ENCODE measurements at regions of chr19 and their contacts with region 1.

Region 1: GRCh38 chr19:39212375-39212742 is 8.3 kb upstream of the SYCN start:
- DNase-seq: peak in 1 of 2 experiments; percentile 85
- H3K4me3 ChIP-seq: no peak overlapping the region
- H3K27ac ChIP-seq: no peak overlapping the region
- H3K4me1 ChIP-seq: 0 out of 7 replicates have a peak, but pooled peaks cover 0 to 3% (median 0%) of the 10 kb centered on the region in 4 experiments
- H3K27me3 ChIP-seq: peaks cover 0 to 2% (median 0%) of the 10 kb centered on the region in 4 experiments; a peak in 1 of 7 replicates
- CTCF ChIP-seq: peak; percentile 76 to 94 (median 81)
- EP300 ChIP-seq: no peak
- POLR2A ChIP-seq: no peak
- RAD21 ChIP-seq: peak; percentile 93 to 97

Region 2: DNA sequence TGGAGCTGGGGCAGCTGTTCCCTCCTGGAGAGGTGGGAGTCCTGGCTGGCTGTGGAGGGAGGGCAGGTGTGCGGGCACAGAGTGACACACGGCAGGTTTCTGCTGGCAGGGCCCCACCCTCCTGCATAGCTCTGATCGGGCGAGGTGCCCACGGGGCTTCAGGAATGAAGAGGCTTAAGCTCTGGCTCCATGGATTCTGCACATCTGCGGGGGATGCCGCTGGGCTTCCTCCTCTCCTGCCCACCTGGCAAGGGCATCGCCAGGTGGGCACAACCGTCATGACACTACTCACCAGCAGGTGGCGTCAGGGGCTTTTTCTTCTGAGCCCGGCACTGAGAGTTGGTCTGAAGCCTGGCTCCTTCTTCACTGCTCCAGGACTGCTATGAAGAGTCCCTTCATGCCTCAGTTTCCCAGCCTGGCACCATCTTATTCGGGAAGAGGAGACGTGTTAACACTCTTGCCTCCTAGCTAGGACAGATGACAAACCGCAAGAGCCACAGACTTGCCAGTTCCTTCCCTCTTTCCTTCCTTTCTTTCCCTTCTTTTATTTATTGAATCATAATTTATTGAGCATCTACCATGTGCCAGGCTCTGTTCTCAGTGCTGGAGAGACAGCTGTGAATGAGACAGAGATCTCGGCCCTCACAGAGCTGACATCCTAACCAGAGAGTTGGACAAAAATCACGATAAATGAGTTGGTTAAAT is 101.9 kb before region 1 on chr19:
- CTCF ChIA-PET with region 1: interaction called, 17 read pairs
- POLR2A ChIA-PET with region 1: no interaction called
- DNase-seq: peak in 1 of 2 experiments; percentile 92
- H3K4me3 ChIP-seq: no peak overlapping the region
- H3K27ac ChIP-seq: no peak overlapping the region
- H3K4me1 ChIP-seq: peaks cover 0 to 5% (median 0%) of the 10 kb centered on the region in 4 experiments; a peak in 3 of 7 replicates
- H3K27me3 ChIP-seq: no peaks in the 10 kb centered on the region
- CTCF ChIP-seq: peak; percentile 79 to 87 (median 82)
- EP300 ChIP-seq: no peak
- POLR2A ChIP-seq: no peak
- RAD21 ChIP-seq: peak; percentile 73 to 82

Region 3: DNA sequence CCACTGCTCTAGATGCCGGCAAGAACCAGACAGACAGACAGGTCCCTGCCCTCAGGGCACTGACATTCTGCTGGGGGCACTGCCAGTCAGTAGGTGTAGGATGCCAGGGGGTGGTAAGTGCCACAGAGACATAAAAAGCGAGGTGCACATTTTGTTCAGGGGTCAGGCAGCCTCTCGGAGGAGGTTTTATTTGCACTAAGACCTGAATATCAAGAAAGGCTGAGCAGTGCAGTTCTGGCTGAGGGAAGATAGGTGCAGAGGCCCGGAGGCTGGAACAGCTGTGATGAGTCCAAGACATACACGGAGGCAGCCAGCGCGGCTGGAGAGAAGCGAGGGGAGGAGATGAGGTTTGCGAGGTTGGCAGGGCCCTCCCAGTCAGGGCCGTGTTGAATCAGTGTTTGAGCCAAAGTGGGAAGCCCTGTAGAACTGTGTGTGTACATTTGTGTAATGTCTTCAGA is 52.0 kb before region 1 on chr19:
- CTCF ChIA-PET with region 1: no interaction called
- POLR2A ChIA-PET with region 1: no interaction called
- DNase-seq: no peak
- H3K4me3 ChIP-seq: no peak overlapping the region
- H3K27ac ChIP-seq: no peak overlapping the region
- H3K4me1 ChIP-seq: peaks cover 0 to 23% (median 10%) of the 10 kb centered on the region in 4 experiments; a peak in 6 of 7 replicates
- H3K27me3 ChIP-seq: peaks cover 0 to 1% (median 0%) of the 10 kb centered on the region in 4 experiments; a peak in 1 of 7 replicates
- CTCF ChIP-seq: no peak
- EP300 ChIP-seq: no peak
- POLR2A ChIP-seq: no peak
- RAD21 ChIP-seq: no peak

Region 4: GRCh38 chr19:39193803-39194202 is 18.6 kb before region 1 on chr19:
- CTCF ChIA-PET with region 1: interaction called, 10 read pairs
- POLR2A ChIA-PET with region 1: no interaction called
- DNase-seq: no peak
- H3K4me3 ChIP-seq: no peak overlapping the region
- H3K27ac ChIP-seq: no peak overlapping the region
- H3K4me1 ChIP-seq: peaks cover 0 to 9% (median 8%) of the 10 kb centered on the region in 4 experiments; a peak in 6 of 7 replicates
- H3K27me3 ChIP-seq: peaks cover 11 to 25% (median 21%) of the 10 kb centered on the region in 4 experiments
- CTCF ChIP-seq: no peak
- EP300 ChIP-seq: no peak
- POLR2A ChIP-seq: no peak
- RAD21 ChIP-seq: no peak

Region 5: GRCh38 chr19:39199025-39199424 is 13.3 kb before region 1 on chr19:
- CTCF ChIA-PET with region 1: interaction called, 18 read pairs
- POLR2A ChIA-PET with region 1: no interaction called
- DNase-seq: no peak
- H3K4me3 ChIP-seq: no peak overlapping the region
- H3K27ac ChIP-seq: no peak overlapping the region
- H3K4me1 ChIP-seq: peaks cover 0 to 9% (median 6%) of the 10 kb centered on the region in 4 experiments; a peak in 5 of 7 replicates
- H3K27me3 ChIP-seq: peaks cover 13 to 33% (median 33%) of the 10 kb centered on the region in 4 experiments
- CTCF ChIP-seq: no peak
- EP300 ChIP-seq: no peak
- POLR2A ChIP-seq: no peak
- RAD21 ChIP-seq: no peak

Region 6: GRCh38 chr19:39223681-39224279 is 11.4 kb after region 1 on chr19:
- CTCF ChIA-PET with region 1: interaction called, 10 read pairs
- POLR2A ChIA-PET with region 1: no interaction called
- DNase-seq: peak in 1 of 2 experiments; percentile 65
- H3K4me3 ChIP-seq: no peak overlapping the region
- H3K27ac ChIP-seq: no peak overlapping the region
- H3K4me1 ChIP-seq: no peaks in the 10 kb centered on the region
- H3K27me3 ChIP-seq: peaks cover 0 to 6% (median 0%) of the 10 kb centered on the region in 4 experiments; a peak in 2 of 7 replicates
- CTCF ChIP-seq: no peak
- EP300 ChIP-seq: no peak
- POLR2A ChIP-seq: no peak
- RAD21 ChIP-seq: no peak

Region 7: DNA sequence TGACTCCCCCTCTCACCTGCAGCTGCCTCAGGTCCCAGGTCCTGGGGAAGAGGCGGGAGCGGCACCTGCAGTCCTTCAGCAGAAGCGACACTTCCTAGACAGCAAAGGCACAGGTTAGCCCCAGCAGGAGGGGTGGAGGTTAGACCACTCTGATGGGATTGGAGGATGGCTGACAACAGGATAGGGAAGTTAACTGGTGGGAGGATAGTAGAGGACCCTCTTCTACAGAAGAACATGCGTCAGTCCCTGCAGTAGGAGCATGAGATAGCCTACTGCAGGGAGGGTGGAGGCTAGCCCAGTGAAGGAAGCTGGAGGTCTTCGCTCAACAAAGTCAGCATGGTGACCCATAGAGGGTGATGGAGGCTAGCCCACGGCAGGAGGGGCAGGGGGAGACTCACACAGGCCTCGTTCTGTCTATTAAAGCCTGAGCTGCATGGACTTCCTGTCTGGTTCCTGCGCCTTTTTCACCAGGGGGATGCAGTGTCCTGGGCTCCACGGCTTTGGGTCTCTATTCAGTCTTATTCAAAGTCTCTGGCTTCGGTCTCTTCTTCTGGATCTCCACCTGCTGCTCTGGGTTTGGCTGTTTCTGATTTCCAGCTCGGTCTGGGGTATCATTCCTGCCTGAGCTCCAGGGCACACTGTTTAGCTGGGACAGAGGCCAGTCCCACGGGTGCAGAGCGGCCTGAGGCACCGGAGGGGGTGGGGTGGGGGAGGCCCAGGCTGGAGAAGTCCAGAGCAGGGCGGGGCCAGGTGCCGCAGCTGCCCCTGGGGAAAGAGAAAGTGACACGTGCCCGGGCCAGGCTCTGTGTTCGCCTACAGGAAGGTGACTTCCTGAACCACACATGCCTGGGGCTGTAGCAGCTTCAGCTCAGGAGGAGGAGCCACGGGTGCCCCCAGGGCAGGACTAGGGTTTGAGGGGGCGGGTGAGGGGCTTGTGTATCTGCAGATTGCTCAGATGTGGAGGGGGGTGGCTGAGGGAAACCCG is 25.1 kb after region 1 on chr19:
- CTCF ChIA-PET with region 1: interaction called, 10 read pairs
- POLR2A ChIA-PET with region 1: no interaction called
- DNase-seq: no peak
- H3K4me3 ChIP-seq: no peak overlapping the region
- H3K27ac ChIP-seq: no peak overlapping the region
- H3K4me1 ChIP-seq: no peaks in the 10 kb centered on the region
- H3K27me3 ChIP-seq: peaks cover 0 to 4% (median 1%) of the 10 kb centered on the region in 4 experiments; a peak in 2 of 7 replicates
- CTCF ChIP-seq: no peak
- EP300 ChIP-seq: no peak
- POLR2A ChIP-seq: no peak
- RAD21 ChIP-seq: no peak

Region 8: DNA sequence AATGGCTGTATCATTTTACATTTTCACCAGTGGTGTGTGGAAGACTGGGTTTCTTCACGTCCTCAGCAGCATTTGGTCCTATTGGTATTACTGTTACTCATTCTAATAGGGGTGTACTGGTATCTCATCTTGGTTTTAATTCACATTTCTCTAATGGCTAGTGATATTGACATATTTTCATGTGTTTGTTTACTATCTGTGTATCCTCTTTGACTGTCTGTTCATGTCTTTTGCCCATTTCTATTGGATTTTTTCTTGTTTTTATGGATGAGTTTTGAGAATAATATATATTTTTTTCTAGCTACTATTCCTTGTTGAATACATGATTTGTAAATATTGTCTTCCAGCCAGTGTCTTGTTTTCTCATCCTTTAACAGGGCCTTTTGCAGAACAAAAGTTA is 69.7 kb after region 1 on chr19:
- CTCF ChIA-PET with region 1: no interaction called
- POLR2A ChIA-PET with region 1: no interaction called
- DNase-seq: no peak
- H3K4me3 ChIP-seq: no peak overlapping the region
- H3K27ac ChIP-seq: no peak overlapping the region
- H3K4me1 ChIP-seq: no peaks in the 10 kb centered on the region
- H3K27me3 ChIP-seq: no peaks in the 10 kb centered on the region; a peak in 2 of 7 replicates
- CTCF ChIP-seq: no peak
- EP300 ChIP-seq: no peak
- POLR2A ChIP-seq: no peak
- RAD21 ChIP-seq: no peak

Region 9: GRCh38 chr19:39328046-39328705 is 115.8 kb after region 1 on chr19:
- CTCF ChIA-PET with region 1: interaction called, 85 read pairs
- POLR2A ChIA-PET with region 1: no interaction called
- DNase-seq: peak in 1 of 2 experiments; percentile 99
- H3K4me3 ChIP-seq: peak overlapping the region in 1 of 4 experiments; percentile 6; a peak in 1 of 8 replicates
- H3K27ac ChIP-seq: no peak overlapping the region
- H3K4me1 ChIP-seq: peaks cover 0 to 6% (median 3%) of the 10 kb centered on the region in 4 experiments; a peak in 5 of 7 replicates
- H3K27me3 ChIP-seq: no peaks in the 10 kb centered on the region
- CTCF ChIP-seq: peak; percentile 89 to 96 (median 95)
- EP300 ChIP-seq: no peak
- POLR2A ChIP-seq: no peak
- RAD21 ChIP-seq: peak; percentile 95 to 99

Measured in H1 (cell line).